ENCODE measurements at regions of chr1 and their contacts with region 1.

Region 1: DNA sequence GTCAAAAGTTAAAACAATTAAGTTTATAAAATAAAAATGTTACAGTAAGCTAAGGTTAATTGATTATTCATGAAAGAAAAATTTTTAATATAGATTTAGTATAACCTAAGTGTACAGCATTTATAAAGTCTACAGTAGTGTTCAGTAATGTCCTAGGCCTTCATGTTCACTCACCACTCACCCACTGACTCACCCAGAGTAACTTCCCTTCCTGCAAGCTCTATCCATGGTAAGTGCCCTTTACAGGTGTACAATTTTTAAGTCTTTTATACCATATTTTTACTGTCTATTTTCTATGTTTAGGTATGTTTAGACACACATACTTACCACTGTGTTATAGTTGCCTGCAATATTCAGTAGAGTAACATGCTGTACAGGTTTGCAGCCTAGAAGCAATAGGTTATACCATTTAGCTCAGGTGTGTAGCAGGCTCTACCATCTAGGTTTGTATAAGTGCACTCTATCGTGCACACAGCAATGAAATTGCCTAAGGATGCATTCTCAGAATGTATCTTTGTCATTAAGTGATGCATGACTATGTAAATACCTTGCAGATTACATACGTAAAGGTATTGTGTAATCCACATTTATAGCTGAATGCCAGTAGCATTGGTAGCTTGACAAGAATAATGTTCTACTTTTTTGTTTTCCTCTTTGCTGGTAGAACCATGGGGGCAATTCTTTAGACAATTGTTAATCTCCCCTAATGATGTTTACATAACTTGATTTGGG is 35.7 kb upstream of the GPR88 start:
- DNase-seq: no peak
- ATAC-seq: no peak
- H3K4me3 ChIP-seq: no peak overlapping the region
- H3K27ac ChIP-seq: no peak overlapping the region
- H3K4me1 ChIP-seq: no peaks in the 10 kb centered on the region
- H3K27me3 ChIP-seq: no peaks in the 10 kb centered on the region

Region 2: GRCh38 chr1:100452641-100453040 is 49.6 kb before region 1 on chr1:
- intact Hi-C with region 1: no loop called
- DNase-seq: no peak
- ATAC-seq: no peak
- H3K4me3 ChIP-seq: no peak overlapping the region
- H3K27ac ChIP-seq: no peak overlapping the region
- H3K4me1 ChIP-seq: no peaks in the 10 kb centered on the region
- H3K27me3 ChIP-seq: no peaks in the 10 kb centered on the region

Region 3: DNA sequence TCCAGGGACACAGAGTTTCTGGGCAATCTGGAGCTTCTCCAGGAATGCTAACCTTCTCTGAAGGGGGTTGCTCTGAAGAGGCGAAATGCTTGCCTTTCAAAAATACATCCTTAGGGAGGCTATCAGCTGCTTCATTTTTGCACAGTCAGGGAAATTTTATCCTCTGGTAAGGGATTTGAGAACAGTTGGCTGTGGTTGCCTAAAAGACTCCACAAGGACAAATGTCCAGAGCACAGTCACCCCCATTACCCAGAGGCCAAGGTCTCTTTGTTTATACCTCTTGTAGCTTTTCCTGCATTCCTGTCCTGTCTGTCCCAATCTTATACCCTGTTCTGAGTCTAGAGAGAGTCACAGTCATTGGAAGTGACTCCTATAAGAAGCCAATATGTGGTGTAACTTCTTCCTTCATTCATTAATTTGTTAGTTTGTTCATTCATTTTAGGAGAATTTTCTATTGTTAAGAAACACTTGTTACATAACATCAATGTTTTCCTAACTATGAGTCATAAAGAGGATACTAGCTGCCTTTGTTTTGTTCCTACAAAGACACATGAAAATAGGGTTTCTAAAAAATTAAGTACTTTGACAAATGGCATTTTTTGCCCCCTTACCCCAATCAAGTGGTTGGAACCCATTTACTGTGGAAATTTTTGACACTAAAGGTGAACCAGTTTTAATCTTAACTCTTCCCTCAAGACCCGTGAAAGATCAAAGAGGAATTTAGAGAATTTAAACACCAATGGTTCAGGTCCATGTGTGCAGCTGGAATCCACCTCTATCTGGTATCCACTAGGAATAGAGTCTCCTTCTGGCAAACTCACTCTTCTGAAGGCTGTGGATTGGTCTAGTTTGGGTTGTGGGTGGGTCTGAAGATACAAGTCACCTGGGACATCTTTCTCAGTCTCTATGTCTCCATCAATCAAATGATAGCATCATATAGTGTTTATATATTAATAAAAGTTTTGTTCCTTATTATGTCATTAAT is 82.8 kb after region 1 on chr1:
- intact Hi-C with region 1: loop called in 1 of 2 experiments (anchors 10 kb)
- DNase-seq: no peak
- ATAC-seq: peak; percentile 33
- H3K4me3 ChIP-seq: no peak overlapping the region
- H3K27ac ChIP-seq: no peak overlapping the region
- H3K4me1 ChIP-seq: no peaks in the 10 kb centered on the region
- H3K27me3 ChIP-seq: no peaks in the 10 kb centered on the region